Transverse colon (tissue), 4 donors: ENCODE measurements at regions of chr18 and their contacts with region 1.

Region 1: DNA sequence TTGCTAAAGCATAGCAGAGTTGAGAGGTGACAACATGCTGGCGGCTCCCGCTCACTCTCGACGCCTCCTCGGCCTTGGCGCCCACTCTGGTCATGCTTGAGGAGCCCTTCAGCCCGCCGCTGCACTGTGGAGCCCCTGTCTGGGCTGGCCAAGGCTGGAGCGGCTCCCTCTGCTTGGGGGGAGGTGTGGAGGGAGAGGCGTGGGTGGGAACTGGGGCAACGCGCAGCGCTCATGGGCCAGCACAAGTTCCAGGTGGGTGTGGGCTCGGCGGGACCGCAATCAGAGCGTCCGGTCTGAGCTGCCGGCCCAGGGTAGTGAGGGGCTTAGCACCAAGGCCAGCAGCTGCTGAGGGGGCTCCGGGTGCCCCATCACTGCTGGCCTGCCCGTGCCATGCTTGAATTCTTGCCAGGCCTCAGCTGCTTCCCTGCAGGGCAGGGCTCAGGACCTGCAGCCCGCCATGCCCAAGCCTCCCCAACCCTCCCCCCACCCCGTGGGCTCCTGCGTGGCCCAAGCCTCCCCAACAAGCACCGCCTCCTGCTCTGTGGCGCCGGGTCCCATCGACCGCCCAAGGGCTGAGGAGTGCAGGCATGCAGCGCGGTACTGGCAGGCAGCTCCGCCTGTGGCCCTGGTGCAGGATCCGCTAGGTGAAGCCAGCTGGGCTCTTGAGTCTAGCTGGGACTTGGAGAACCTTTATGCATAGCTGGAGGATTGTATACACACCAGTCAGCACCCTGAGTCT is 2052.8 kb upstream of the CELF4 start:
- DNase-seq: no peak
- H3K4me3 ChIP-seq: no peak overlapping the region
- H3K27ac ChIP-seq: no peak overlapping the region
- H3K4me1 ChIP-seq: no peaks in the 10 kb centered on the region
- H3K27me3 ChIP-seq: no peaks in the 10 kb centered on the region
- CTCF ChIP-seq: no peak
- EP300 ChIP-seq: no peak
- POLR2A ChIP-seq: no peak

Region 2: GRCh38 chr18:39635966-39636365 is 17.5 kb after region 1 on chr18:
- in situ Hi-C with region 1: no loop called
- intact Hi-C with region 1: loop called (anchors 1 kb)
- DNase-seq: no peak
- H3K4me3 ChIP-seq: no peak overlapping the region
- H3K27ac ChIP-seq: no peak overlapping the region
- H3K4me1 ChIP-seq: no peaks in the 10 kb centered on the region
- H3K27me3 ChIP-seq: no peaks in the 10 kb centered on the region
- CTCF ChIP-seq: no peak
- EP300 ChIP-seq: no peak
- POLR2A ChIP-seq: no peak

Region 3: GRCh38 chr18:39724652-39725051 is 106.2 kb after region 1 on chr18:
- in situ Hi-C with region 1: no loop called
- intact Hi-C with region 1: no loop called
- DNase-seq: no peak
- H3K4me3 ChIP-seq: no peak overlapping the region
- H3K27ac ChIP-seq: no peak overlapping the region
- H3K4me1 ChIP-seq: no peaks in the 10 kb centered on the region
- H3K27me3 ChIP-seq: no peaks in the 10 kb centered on the region
- CTCF ChIP-seq: no peak
- EP300 ChIP-seq: no peak
- POLR2A ChIP-seq: no peak